CD4-positive, alpha-beta T cell (primary cell): ENCODE measurements at regions of chr17 and their contacts with region 1.

Region 1: DNA sequence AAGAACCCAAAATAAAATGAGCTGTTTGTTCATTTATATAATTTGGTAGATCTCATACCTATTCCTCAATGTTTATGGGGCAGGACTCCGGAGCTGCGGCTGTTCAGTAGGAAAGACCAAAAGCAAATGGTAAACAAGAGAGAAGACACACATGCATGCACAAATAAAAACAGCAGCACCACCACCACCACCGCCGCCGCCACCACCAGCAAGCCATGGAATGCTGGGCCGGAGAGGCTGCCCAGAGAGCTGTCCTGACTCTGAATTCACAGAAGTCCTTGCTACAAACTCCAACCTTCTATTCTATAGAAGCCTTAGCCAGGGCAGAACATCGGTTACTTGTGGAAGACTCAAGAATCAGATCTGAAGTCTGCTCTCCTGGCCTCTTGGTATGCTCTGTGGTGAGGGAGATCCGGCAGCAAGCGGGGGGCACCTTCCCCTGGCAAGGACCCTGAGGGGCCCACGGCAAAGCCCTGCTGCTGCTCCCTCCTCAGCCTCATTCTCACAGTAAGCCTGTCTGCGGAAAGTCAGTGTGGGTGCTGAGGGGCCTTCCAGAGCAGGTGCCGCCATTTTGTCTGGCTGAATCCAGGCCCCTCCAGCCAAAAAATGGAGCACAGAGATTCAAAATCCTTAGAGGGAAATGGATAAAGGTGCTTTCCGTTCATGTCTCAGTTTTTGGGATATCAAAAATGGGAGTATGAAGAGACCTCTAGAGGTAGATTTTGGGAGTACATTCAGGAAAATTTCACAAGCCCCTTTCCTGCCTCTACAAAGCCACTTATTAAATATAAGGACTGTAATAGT is 6.4 kb upstream of the FOXJ1 start:
- DNase-seq: no peak
- ATAC-seq: no peak
- H3K4me3 ChIP-seq: no peak overlapping the region
- H3K4me3 Mint-ChIP-seq: no peak overlapping the region
- H3K27ac ChIP-seq: peak overlapping the region in 1 of 2 donors; percentile 84
- H3K27ac Mint-ChIP-seq: peak overlapping the region; percentile 97
- H3K4me1 ChIP-seq: peaks cover 70% of the 10 kb centered on the region
- H3K4me1 Mint-ChIP-seq: peaks cover 81% of the 10 kb centered on the region
- H3K27me3 ChIP-seq: no peaks in the 10 kb centered on the region
- H3K27me3 Mint-ChIP-seq: no peaks in the 10 kb centered on the region
- CTCF ChIP-seq: no peak

Region 2: GRCh38 chr17:76271669-76272540 is 124.5 kb after region 1 on chr17:
- CTCF ChIA-PET with region 1: no interaction called
- POLR2A ChIA-PET with region 1: interaction called, 17 read pairs
- intact Hi-C with region 1: loop called in 1 of 2 experiments (anchors 5 kb)
- DNase-seq: peak in 11 of 14 experiments; percentile 23 to 89 (median 55)
- ATAC-seq: peak; percentile 25
- H3K4me3 ChIP-seq: peak overlapping the region; percentile 57
- H3K4me3 Mint-ChIP-seq: peak overlapping the region; percentile 82
- H3K27ac ChIP-seq: peak overlapping the region; percentile 82 to 86
- H3K27ac Mint-ChIP-seq: peak overlapping the region; percentile 98
- H3K4me1 ChIP-seq: peaks cover 92% of the 10 kb centered on the region
- H3K4me1 Mint-ChIP-seq: peaks cover 66% of the 10 kb centered on the region
- H3K27me3 ChIP-seq: no peaks in the 10 kb centered on the region
- H3K27me3 Mint-ChIP-seq: no peaks in the 10 kb centered on the region
- CTCF ChIP-seq: no peak

Region 3: GRCh38 chr17:77109764-77110359 is 962.4 kb after region 1 on chr17:
- CTCF ChIA-PET with region 1: no interaction called
- POLR2A ChIA-PET with region 1: no interaction called
- intact Hi-C with region 1: no loop called
- DNase-seq: no peak
- ATAC-seq: no peak
- H3K4me3 ChIP-seq: no peak overlapping the region
- H3K4me3 Mint-ChIP-seq: peak overlapping the region; percentile 25
- H3K27ac ChIP-seq: no peak overlapping the region
- H3K27ac Mint-ChIP-seq: no peak overlapping the region
- H3K4me1 ChIP-seq: peaks cover 20% of the 10 kb centered on the region
- H3K4me1 Mint-ChIP-seq: peaks cover 28% of the 10 kb centered on the region
- H3K27me3 ChIP-seq: no peaks in the 10 kb centered on the region
- H3K27me3 Mint-ChIP-seq: no peaks in the 10 kb centered on the region
- CTCF ChIP-seq: no peak